ENCODE measurements at regions of chr2 and their contacts with region 1.

Region 1: GRCh38 chr2:41869542-41870264 is 178.1 kb upstream of the PKDCC start:
- DNase-seq: peak; percentile 31 to 64 (median 52)
- ATAC-seq: peak; percentile 79
- H3K4me3 ChIP-seq: no peak overlapping the region
- H3K4me3 Mint-ChIP-seq: no peak overlapping the region
- H3K27ac ChIP-seq: no peak overlapping the region
- H3K27ac Mint-ChIP-seq: no peak overlapping the region
- H3K4me1 ChIP-seq: no peaks in the 10 kb centered on the region
- H3K4me1 Mint-ChIP-seq: peaks cover 0 to 13% (median 0%) of the 10 kb centered on the region in 7 donors
- H3K27me3 ChIP-seq: no peaks in the 10 kb centered on the region
- H3K27me3 Mint-ChIP-seq: peaks cover 0 to 22% (median 0%) of the 10 kb centered on the region in 5 donors

Region 2: DNA sequence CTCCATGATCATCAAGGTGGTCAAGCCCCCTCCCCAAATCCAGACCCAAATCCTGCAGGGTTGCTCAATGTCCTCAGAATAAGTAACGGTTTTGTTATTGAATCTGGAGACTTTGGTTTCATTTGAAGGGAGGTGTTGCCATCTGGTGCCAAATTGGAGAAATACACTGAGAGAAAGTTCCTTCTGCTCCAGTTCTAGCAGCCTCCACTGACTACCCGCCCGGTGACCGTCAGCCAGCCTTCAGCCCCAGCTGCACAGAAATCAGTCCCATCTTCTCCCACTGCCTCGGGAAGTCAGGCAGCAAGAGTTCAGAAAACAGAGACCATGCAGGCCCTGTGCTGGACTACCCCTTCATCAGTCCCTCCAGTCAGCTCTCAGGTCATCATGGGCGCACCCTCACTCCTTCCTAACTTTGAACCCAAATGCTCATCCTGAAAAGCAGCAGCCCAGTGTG is 216.8 kb after region 1 on chr2:
- CTCF ChIA-PET with region 1: interaction called, 53 read pairs
- POLR2A ChIA-PET with region 1: no interaction called
- intact Hi-C with region 1: loop called (anchors 1 kb)
- DNase-seq: peak in 7 of 9 donors; percentile 18 to 59 (median 50)
- ATAC-seq: peak; percentile 62
- H3K4me3 ChIP-seq: no peak overlapping the region
- H3K4me3 Mint-ChIP-seq: no peak overlapping the region
- H3K27ac ChIP-seq: no peak overlapping the region
- H3K27ac Mint-ChIP-seq: no peak overlapping the region
- H3K4me1 ChIP-seq: no peaks in the 10 kb centered on the region
- H3K4me1 Mint-ChIP-seq: peaks cover 0 to 10% (median 7%) of the 10 kb centered on the region in 7 donors
- H3K27me3 ChIP-seq: no peaks in the 10 kb centered on the region
- H3K27me3 Mint-ChIP-seq: peaks cover 0 to 25% (median 6%) of the 10 kb centered on the region in 5 donors

Region 3: GRCh38 chr2:42238644-42239288 is 369.1 kb after region 1 on chr2:
- CTCF ChIA-PET with region 1: no interaction called
- POLR2A ChIA-PET with region 1: no interaction called
- intact Hi-C with region 1: loop called in 1 of 2 experiments (anchors 1 kb)
- DNase-seq: peak in 6 of 9 donors; percentile 22 to 42 (median 30)
- ATAC-seq: peak; percentile 75
- H3K4me3 ChIP-seq: no peak overlapping the region
- H3K4me3 Mint-ChIP-seq: peak overlapping the region in 1 of 10 donors; percentile 9
- H3K27ac ChIP-seq: no peak overlapping the region
- H3K27ac Mint-ChIP-seq: peak overlapping the region in 2 of 9 donors; percentile 43 to 65
- H3K4me1 ChIP-seq: peaks cover 32 to 33% of the 10 kb centered on the region in 2 donors
- H3K4me1 Mint-ChIP-seq: peaks cover 28 to 97% (median 89%) of the 10 kb centered on the region in 7 donors
- H3K27me3 ChIP-seq: no peaks in the 10 kb centered on the region
- H3K27me3 Mint-ChIP-seq: no peaks in the 10 kb centered on the region

Region 4: GRCh38 chr2:42328148-42328833 is 458.6 kb after region 1 on chr2:
- CTCF ChIA-PET with region 1: interaction called, 15 read pairs
- POLR2A ChIA-PET with region 1: no interaction called
- intact Hi-C with region 1: loop called in 1 of 2 experiments (anchors 5 kb)
- DNase-seq: peak in 5 of 9 donors; percentile 13 to 34 (median 32)
- ATAC-seq: peak; percentile 57
- H3K4me3 ChIP-seq: no peak overlapping the region
- H3K4me3 Mint-ChIP-seq: no peak overlapping the region
- H3K27ac ChIP-seq: no peak overlapping the region
- H3K27ac Mint-ChIP-seq: peak overlapping the region in 7 of 9 donors; percentile 12 to 77 (median 57)
- H3K4me1 ChIP-seq: no peaks in the 10 kb centered on the region
- H3K4me1 Mint-ChIP-seq: peaks cover 0 to 5% (median 0%) of the 10 kb centered on the region in 7 donors
- H3K27me3 ChIP-seq: no peaks in the 10 kb centered on the region
- H3K27me3 Mint-ChIP-seq: no peaks in the 10 kb centered on the region

Region 5: DNA sequence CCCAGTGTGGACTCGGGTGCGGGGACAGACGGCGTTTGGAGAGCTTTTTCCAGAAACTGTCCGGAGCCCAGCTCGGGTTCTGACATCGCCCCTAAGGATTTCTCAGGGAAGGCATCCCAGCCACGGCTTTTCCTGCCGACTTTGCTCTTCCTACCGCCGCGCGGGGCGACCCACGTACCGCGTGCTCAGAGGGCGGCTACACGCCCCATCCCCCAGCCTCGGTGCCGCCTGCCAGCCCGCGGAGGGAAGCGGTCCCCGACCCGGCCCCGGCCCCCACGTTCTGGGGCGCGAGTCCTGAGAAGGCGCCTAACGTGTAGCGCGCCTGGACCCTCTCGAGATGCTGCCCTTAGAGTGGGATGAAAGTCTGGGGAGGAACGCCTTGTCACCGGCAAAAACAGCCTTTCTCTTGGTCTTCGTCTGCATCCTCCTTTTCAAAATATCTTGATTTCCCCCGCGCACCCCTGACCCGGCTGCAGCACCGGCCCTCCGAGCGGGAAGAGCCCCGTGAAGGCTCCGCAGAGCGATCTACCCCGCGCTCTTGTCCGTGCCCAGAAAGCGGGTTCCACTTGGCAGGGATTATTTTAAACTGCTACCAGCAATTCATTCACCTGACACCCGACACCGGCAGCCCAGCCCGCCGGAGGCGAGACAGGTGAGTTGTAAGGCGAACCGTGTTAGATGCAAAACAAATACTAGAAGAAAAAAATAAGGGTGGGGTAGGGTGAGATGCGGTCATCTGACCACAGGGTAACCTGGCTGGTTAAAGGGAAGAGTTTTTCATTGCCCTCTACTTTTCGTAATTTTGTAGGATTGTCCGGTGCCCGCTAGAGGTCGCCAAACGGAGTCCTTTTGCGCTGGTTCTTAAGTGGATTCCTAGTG is 624.9 kb after region 1 on chr2:
- CTCF ChIA-PET with region 1: no interaction called
- POLR2A ChIA-PET with region 1: no interaction called
- intact Hi-C with region 1: loop called in 1 of 2 experiments (anchors 2 kb)
- DNase-seq: peak; percentile 60 to 83 (median 77)
- ATAC-seq: peak; percentile 74
- H3K4me3 ChIP-seq: peak overlapping the region; percentile 60
- H3K4me3 Mint-ChIP-seq: peak overlapping the region; percentile 82 to 99 (median 96)
- H3K27ac ChIP-seq: peak overlapping the region; percentile 51
- H3K27ac Mint-ChIP-seq: peak overlapping the region; percentile 37 to 93 (median 83)
- H3K4me1 ChIP-seq: peaks cover 0 to 10% of the 10 kb centered on the region in 2 donors
- H3K4me1 Mint-ChIP-seq: peaks cover 0 to 18% (median 10%) of the 10 kb centered on the region in 7 donors
- H3K27me3 ChIP-seq: no peaks in the 10 kb centered on the region
- H3K27me3 Mint-ChIP-seq: peaks cover 0 to 49% (median 5%) of the 10 kb centered on the region in 5 donors

Measured in naive thymus-derived CD4-positive, alpha-beta T cell (primary cell).